ENCODE measurements at regions of chr1 and their contacts with region 1.

Region 1: GRCh38 chr1:232435729-232436128 is 194.2 kb downstream of the SIPA1L2 start:
- DNase-seq: peak; percentile 28
- ATAC-seq: peak; percentile 35 to 36

Region 2: DNA sequence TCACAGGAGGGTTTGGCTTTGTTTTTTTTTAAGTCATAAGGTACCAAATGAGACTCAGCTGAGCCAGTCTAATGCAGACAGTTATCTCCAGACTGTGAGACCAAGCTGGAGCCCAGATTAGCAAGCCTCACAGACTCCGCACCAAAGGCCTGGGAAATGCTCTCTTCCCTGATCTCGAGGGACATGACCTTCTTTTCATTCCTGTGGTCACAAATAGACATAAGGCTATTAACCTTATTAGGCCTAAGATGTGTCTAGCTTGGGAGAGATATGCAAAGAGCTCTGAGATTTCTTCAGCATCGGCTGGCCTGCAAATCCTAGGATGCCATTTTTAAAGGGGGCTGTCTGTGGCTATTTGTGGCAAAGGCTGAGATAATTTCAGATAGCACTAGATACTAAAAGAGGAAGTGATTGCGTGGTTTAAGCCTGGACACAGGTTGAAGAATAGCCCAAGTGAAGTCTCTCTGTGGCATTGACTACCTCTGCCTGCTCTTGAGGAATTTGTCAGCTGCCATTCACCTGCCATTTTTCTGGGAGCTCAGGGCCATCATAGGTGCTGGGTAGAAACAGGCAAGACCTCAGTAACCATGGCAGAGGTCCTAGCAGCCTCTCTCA is 107.1 kb before region 1 on chr1:
- intact Hi-C with region 1: loop called in 1 of 2 experiments (anchors 10 kb)
- DNase-seq: no peak
- ATAC-seq: peak; percentile 47 to 80

Region 3: GRCh38 chr1:232524056-232524455 is 88.3 kb after region 1 on chr1:
- intact Hi-C with region 1: no loop called
- DNase-seq: no peak
- ATAC-seq: no peak

Measured in left cardiac atrium (tissue), 4 donors.